ENCODE measurements at regions of chr15 and their contacts with region 1.

Region 1: DNA sequence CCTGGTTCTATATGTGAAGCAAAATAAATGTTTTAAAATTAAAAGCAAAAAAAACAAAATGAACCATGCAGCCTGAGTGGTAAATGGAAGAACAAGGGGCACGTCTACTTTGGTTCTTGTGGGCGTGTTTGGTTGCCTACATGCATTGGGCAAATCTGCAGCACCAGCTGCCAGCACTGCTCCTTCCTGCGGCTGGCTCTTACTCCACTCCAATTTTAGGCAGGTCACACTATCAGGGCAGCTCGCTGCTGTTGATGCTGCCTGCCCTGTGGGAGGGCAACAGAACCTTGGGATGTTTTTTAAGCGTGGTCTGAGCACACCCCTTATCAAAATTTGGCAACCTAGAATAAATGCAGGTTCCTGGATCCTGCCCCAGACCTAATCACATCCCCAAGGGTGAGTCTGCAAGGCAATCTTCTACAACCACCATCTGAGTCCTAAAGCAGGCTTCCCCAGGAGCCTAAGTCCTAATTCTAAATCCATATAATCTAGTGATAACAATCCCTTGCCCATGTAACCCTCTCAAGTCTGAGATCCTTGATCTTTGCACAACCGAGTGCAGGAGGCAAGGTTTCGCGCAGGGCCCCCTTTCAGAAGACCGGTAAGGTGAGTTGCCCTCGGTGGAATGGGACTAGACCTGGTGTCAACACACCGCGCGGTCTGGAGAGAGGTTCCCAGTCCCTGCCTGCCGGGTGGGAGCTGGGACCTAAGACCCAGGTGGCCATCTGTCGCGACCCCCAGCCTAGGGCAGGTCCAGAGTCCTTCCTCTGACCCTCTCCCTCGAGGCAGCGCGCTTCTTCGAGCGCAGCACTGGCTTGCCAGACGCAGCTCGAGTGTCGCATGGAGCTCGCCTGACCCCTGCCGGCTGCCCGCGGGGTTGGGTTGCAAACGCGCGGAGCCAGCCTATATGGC is 15.9 kb downstream of the IVD start:
- DNase-seq: peak; percentile 65 to 81 (median 80)
- H3K4me3 ChIP-seq: peak overlapping the region in 1 of 7 experiments; percentile 50
- H3K27ac ChIP-seq: no peak overlapping the region
- H3K4me1 ChIP-seq: peaks cover 0 to 10% (median 5%) of the 10 kb centered on the region in 4 experiments
- H3K27me3 ChIP-seq: no peaks in the 10 kb centered on the region

Region 2: DNA sequence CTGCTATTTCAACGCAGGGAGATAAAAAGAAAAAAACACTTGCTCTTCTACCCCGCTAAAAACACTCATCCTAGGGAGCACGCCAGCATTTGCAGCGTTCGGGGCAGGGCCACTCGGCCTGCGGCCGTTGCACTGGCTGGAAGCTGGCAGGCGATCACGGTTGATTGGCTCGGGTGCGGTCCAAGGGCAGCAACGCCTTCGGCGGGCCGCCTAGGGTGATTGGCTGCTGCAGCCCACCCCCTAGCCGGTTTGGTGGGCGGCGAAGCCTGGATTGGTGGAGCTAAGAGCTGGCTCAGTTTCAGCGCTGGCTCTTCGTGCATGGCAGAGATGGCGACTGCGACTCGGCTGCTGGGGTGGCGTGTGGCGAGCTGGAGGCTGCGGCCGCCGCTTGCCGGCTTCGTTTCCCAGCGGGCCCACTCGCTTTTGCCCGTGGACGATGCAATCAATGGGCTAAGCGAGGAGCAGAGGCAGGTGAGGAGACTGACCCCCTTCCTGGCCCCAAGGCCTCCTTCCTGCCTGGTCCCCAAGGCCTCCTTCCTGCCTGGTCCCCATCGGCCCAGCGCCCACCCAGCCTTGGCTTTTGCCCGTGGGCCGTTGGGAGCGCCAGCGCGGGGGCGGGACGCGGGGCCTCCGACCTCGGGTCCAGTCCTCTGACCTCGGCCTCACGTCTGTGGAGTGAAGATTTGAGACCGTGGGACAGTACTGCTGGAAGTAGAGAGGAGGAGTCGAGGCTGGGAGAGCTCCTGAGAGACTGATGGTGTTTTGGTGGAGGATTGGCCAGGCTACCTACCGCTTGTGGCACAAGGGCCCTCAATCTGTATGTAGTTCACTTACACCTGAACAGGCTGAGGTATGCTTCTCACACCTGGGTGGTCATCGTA is 15.8 kb before region 1 on chr15 and contains the start of gene IVD:
- CTCF ChIA-PET with region 1: interaction called, 31 read pairs
- POLR2A ChIA-PET with region 1: interaction called, 3 read pairs
- DNase-seq: peak; percentile 92 to 97 (median 97)
- H3K4me3 ChIP-seq: peak within 1 kb of the TSS; percentile 38 to 95 (median 83)
- H3K27ac ChIP-seq: peak within 1 kb of the TSS; percentile 61 to 81
- H3K4me1 ChIP-seq: peaks cover 10 to 29% (median 25%) of the 10 kb centered on the region in 4 experiments
- H3K27me3 ChIP-seq: no peaks in the 10 kb centered on the region

Measured in common myeloid progenitor, CD34-positive (primary cell).